Activated CD4-positive, alpha-beta memory T cell treated with anti-CD3 and anti-CD28 coated beads, Interleukin-2, amount 10 ng/mL, durations not matched to agents 7 days and 5 days (primary cell): ENCODE measurements at regions of chr12 and their contacts with region 1.

Region 1: DNA sequence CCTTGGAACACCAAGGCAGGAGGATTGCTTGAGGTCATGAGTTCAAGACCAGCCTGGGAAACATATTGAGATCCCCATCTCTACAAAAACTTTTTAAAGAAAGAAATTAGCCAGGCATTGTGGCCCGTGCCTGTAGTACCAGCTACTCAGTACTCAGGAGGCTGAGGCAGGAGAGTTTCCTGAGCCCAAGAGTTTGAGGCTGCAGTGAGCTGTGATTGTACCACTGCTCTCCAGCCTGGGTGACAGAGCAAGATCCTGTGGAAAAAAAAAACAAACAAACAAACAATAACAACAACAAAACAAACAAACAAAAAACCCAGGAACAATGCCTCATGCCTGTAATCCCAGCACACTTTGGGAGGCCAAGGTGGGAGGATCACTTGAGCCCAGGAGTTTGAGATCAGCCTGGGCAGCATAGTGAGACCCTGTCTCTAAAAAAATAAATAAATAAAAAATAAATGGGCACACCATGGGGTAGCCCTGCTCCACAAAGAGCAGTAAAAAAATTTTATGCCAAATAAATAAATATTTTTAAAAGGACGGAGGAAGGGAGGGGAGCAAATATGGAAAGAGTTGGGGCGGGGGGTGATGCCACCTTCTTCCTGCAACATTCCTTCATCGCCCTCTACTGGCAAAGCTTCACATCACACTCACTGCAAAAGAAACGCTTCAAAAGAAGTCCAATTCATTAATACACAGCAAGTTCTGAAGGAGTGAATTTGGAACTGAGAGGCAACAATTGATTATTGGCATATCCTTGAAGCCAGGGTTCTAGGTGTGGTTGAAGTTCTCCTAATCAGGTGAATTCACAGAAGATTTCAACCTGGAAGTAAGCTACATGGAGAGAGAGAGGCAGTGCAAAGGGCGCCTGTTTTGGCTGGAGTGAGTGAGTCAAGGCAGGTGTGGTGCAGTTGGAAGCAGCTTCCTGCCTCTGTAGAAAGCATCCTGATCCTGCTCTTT is 8.8 kb upstream of the GNPTAB start:
- DNase-seq: peak; percentile 73
- H3K4me3 Mint-ChIP-seq: no peak overlapping the region
- H3K27ac Mint-ChIP-seq: no peak overlapping the region
- H3K4me1 Mint-ChIP-seq: peaks cover 20% of the 10 kb centered on the region
- H3K27me3 Mint-ChIP-seq: peaks cover 3% of the 10 kb centered on the region

Region 2: GRCh38 chr12:101407436-101408345 is 431.9 kb before region 1 on chr12 and contains the start of gene ARL1:
- CTCF ChIA-PET with region 1: interaction called, 16 read pairs
- POLR2A ChIA-PET with region 1: no interaction called
- DNase-seq: peak; percentile 69
- H3K4me3 Mint-ChIP-seq: peak within 1 kb of the TSS; percentile 99
- H3K27ac Mint-ChIP-seq: peak within 1 kb of the TSS; percentile 84
- H3K4me1 Mint-ChIP-seq: peaks cover 29% of the 10 kb centered on the region
- H3K27me3 Mint-ChIP-seq: peaks cover 7% of the 10 kb centered on the region
- total RNA-seq, gene ARL1: 47.7 to 49.3 TPM

Region 3: DNA sequence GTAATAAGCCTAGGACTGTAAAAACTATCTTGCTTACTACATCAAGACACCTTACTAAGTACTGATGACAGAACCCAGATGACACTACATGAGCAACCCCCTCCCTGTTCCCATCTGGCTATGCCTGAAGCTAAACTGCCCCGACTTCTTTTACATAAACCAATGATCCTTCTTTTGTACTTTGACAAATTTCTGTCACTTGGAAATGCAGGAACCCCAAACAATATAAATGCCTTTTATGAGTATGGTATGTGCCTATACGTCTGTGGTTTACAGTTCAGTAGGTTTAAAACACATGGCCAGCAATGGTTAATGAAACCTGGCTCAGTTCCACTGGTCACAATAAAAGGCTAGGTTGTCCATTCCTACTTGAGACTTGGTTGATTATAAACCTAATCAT is 106.4 kb before region 1 on chr12:
- CTCF ChIA-PET with region 1: no interaction called
- POLR2A ChIA-PET with region 1: no interaction called
- DNase-seq: no peak
- H3K4me3 Mint-ChIP-seq: no peak overlapping the region
- H3K27ac Mint-ChIP-seq: no peak overlapping the region
- H3K4me1 Mint-ChIP-seq: no peaks in the 10 kb centered on the region
- H3K27me3 Mint-ChIP-seq: no peaks in the 10 kb centered on the region

Region 4: GRCh38 chr12:101767537-101767936 is 72.1 kb before region 1 on chr12:
- CTCF ChIA-PET with region 1: interaction called, 125 read pairs
- POLR2A ChIA-PET with region 1: interaction called, 15 read pairs
- DNase-seq: no peak
- H3K4me3 Mint-ChIP-seq: no peak overlapping the region
- H3K27ac Mint-ChIP-seq: no peak overlapping the region
- H3K4me1 Mint-ChIP-seq: peaks cover 12% of the 10 kb centered on the region
- H3K27me3 Mint-ChIP-seq: no peaks in the 10 kb centered on the region

Region 5: DNA sequence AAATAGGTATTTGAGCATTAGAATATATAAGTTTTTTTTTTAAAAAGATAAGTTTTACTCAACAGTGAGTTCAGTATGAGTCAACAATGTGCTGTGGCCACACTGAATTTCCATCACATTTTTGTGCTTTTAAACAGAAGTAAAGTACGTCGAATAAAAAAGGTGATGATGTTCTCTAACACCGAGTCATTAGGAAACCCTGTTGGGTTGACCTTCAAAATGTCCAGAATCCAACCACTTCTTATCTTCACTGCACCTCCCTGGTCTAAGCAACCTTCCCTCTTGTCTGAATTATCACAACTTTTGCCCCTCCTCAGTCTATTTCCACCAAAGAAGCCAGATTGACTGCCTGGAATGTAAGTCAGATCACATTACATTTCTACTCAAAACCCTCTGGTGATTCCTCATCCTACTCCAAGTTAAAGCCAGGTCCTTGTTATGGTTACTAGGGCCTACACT is 57.3 kb before region 1 on chr12:
- CTCF ChIA-PET with region 1: interaction called, 39 read pairs
- POLR2A ChIA-PET with region 1: no interaction called
- DNase-seq: no peak
- H3K4me3 Mint-ChIP-seq: no peak overlapping the region
- H3K27ac Mint-ChIP-seq: peak overlapping the region; percentile 0
- H3K4me1 Mint-ChIP-seq: peaks cover 49% of the 10 kb centered on the region
- H3K27me3 Mint-ChIP-seq: no peaks in the 10 kb centered on the region

Region 6: DNA sequence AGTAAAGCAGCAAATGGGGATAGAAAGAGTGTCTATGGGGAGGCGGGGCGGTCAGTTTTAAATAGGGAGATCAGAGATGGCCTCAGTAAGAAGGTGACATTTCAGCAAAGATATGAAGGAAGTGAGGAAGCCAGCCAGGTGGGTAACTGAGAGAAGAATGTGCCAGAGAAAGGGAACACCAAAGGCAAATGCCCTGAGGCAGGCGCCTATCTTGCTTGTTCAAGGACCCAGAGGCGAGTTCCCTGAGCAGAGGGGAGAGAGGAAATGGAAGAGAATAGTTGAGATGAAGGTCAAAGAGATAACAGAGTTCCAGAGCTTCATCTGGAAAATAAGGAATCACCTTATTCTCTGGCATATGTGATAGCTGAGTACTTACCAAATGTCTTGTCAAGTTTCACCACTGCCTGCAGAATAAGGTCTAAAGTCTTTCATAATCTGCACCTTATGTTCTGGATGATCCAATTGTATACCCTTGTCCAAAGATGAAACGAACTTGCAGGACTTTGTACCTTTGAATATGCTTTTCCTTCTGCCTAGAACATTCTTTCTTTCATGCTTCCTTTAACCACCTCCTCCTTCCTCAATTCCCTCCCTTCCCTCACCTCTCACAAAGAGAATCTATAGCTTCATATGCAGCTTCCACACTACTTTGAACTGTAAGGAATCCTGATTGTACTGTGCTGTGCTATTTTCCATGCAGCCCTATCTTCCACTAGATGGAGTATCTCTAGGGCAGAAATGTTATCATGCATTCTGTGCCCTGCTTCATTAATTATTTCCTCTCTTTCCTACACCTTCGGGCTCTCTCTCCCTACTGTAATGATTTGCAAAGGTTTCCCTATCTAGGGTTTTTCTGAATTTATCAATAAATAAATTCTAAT is 47.3 kb before region 1 on chr12:
- CTCF ChIA-PET with region 1: interaction called, 24 read pairs
- POLR2A ChIA-PET with region 1: interaction called, 4 read pairs
- DNase-seq: no peak
- H3K4me3 Mint-ChIP-seq: no peak overlapping the region
- H3K27ac Mint-ChIP-seq: peak overlapping the region; percentile 24
- H3K4me1 Mint-ChIP-seq: peaks cover 57% of the 10 kb centered on the region
- H3K27me3 Mint-ChIP-seq: no peaks in the 10 kb centered on the region